ENCODE measurements at regions of chr11 and their contacts with region 1.

Region 1: GRCh38 chr11:66883016-66883968 is 26.4 kb downstream of the LRFN4 start:
- DNase-seq: peak; percentile 21
- H3K4me3 ChIP-seq: no peak overlapping the region
- CTCF ChIP-seq: peak; percentile 69

Region 2: DNA sequence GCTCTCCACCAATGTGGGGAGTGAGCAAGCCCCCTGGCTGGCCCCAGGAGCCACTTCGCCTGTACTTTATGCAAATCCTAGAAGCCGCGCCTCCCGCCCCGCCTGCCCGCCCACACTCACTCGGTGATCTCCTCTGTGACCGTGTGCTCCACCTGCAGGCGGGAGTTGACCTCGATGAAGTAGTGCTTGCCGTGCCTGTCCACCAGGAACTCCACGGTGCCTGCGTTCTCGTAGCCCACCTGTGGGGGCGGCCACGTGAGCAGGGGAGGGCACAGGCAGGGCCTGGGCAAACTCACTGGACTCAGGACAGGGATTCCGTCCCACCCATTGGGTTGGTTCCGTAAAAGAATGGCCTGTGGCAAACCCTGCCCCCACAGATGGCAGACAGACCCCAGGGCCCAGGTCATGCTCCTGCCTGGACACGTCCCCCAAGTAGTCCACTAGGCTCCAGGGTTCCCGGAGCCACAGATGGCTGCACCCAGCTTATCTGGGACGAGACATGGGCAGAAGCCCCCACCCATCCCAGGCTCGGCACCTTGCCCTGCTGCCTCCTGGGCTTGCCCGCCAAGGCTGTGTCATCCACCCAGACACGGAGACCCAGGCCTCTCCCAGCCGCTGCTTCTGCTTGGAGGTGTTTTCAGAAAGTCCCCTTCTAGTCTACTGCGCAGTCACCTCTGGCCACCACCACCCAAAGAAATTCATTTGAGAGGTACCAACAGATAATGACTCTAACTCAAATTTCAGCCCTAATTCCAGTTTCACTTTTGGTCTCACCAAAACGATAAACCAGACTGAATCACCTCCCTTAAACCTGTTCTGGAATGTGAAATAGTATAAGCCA is 14.3 kb before region 1 on chr11:
- CTCF ChIA-PET with region 1: interaction called, 27 read pairs
- POLR2A ChIA-PET with region 1: no interaction called
- DNase-seq: no peak
- H3K4me3 ChIP-seq: no peak overlapping the region
- CTCF ChIP-seq: no peak

Region 3: DNA sequence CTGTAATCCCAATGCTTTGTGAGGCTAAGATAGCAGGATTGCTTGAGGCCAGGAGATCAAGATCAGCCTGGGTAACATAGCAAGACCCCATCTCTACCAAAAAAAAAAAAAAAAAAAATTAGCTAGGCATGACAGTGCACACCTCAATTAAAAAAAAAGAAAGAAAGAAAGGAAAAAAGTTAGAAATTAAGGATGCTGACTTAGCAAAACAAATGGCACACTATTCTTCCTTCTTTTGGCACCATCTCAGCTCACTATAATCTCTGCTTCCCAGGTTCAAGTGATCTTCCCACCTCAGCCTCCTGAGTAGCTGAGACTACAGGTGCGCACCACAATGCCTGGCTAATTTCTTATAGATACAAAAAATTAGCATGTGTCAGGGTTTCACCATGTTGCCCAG is 41.0 kb after region 1 on chr11:
- CTCF ChIA-PET with region 1: no interaction called
- POLR2A ChIA-PET with region 1: no interaction called
- DNase-seq: no peak
- H3K4me3 ChIP-seq: no peak overlapping the region
- CTCF ChIP-seq: no peak

Region 4: GRCh38 chr11:67179892-67180490 is 296.7 kb after region 1 on chr11:
- CTCF ChIA-PET with region 1: no interaction called
- POLR2A ChIA-PET with region 1: no interaction called
- DNase-seq: no peak
- H3K4me3 ChIP-seq: no peak overlapping the region
- CTCF ChIP-seq: no peak